Activated CD4-positive, alpha-beta T cell treated with anti-CD3 and anti-CD28 coated beads, Interleukin-2, amount 10 ng/mL, durations not matched to agents 24 days and 14 days (primary cell): ENCODE measurements at regions of chrX and their contacts with region 1.

Region 1: GRCh38 chrX:107627838-107628661 is at the start of gene PRPS1:
- DNase-seq: peak; percentile 96
- H3K4me3 Mint-ChIP-seq: peak within 1 kb of the TSS; percentile 94
- H3K27ac Mint-ChIP-seq: peak within 1 kb of the TSS; percentile 95
- H3K4me1 Mint-ChIP-seq: peaks cover 22% of the 10 kb centered on the region
- H3K27me3 Mint-ChIP-seq: no peaks in the 10 kb centered on the region
- total RNA-seq, gene PRPS1: 112 and 115 TPM in 2 replicates

Region 2: DNA sequence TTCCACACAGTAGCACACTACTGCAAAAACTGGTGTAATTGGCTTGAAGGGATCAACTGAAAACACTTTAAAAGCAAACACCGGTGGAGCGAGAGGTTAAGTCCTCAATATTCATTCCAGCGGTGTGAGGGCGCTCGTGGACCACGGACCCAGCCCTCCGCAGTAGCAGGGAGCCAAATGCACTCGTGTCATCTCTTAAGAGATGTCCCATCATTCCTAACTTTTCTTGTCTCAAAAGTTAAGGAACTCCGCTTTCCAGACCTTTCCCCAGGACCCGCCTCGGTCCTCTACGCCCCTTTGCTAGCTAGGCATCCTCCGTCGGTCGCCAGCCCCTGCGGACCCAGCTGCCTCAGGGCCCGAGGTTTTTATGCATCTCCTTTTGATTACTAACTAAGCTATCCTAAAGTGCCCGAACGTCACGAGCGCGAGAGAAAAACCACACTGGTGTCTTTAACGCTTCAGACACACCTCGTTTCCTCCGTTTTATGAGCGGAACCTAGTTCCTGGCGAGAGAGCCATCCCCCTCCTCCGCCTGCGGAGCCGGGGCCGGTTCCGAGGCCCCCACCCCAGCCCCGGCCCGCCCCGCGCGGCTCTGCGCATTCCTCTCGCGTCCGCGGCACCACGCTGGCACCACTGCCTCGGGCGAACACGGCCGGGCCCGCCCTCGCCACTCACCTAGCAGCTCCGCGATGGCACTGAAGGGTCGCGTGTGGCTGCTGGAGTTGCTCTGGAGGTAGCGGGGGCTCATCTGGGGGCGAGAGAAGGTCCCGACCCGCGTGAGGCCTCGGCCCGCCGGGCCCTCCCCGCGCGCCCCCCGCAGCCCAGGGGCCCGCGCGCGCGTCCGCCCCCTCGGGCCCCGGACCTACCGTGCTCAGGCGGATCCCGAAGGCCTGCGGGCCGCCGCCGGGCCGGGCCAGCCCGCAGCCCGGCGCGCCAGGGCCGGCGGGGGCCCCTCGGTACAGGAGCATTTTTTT is 628.8 kb before region 1 on chrX:
- intact Hi-C with region 1: loop called (anchors 10 kb)
- DNase-seq: peak; percentile 80
- H3K4me3 Mint-ChIP-seq: peak overlapping the region; percentile 88
- H3K27ac Mint-ChIP-seq: peak overlapping the region; percentile 40
- H3K4me1 Mint-ChIP-seq: peaks cover 7% of the 10 kb centered on the region
- H3K27me3 Mint-ChIP-seq: no peaks in the 10 kb centered on the region

Region 3: DNA sequence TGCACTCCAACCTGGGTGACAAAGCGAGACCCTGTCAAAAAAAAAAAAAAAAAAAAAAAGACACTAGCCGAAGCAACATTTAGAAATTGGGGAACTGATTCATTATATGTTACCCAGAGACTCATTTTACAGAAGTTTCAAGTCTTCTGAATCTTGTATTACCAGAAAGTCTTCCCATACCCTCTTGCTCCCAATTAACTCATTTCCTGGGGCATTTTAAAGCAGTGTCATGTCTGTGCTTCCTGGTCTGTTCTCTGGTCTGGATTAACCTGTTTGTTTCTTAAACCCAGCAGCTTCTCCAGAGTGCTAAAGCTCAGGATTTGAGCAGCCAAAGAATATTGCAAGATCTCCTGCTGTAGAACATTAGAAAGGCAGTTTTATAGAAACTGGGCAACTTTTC is 134.9 kb before region 1 on chrX:
- intact Hi-C with region 1: no loop called
- DNase-seq: no peak
- H3K4me3 Mint-ChIP-seq: no peak overlapping the region
- H3K27ac Mint-ChIP-seq: no peak overlapping the region
- H3K4me1 Mint-ChIP-seq: no peaks in the 10 kb centered on the region
- H3K27me3 Mint-ChIP-seq: peaks cover 3% of the 10 kb centered on the region

Region 4: GRCh38 chrX:107537815-107538214 is 90.2 kb before region 1 on chrX:
- intact Hi-C with region 1: loop called (anchors 5 kb)
- DNase-seq: peak; percentile 75
- H3K4me3 Mint-ChIP-seq: no peak overlapping the region
- H3K27ac Mint-ChIP-seq: no peak overlapping the region
- H3K4me1 Mint-ChIP-seq: no peaks in the 10 kb centered on the region
- H3K27me3 Mint-ChIP-seq: peaks cover 11% of the 10 kb centered on the region

Region 5: DNA sequence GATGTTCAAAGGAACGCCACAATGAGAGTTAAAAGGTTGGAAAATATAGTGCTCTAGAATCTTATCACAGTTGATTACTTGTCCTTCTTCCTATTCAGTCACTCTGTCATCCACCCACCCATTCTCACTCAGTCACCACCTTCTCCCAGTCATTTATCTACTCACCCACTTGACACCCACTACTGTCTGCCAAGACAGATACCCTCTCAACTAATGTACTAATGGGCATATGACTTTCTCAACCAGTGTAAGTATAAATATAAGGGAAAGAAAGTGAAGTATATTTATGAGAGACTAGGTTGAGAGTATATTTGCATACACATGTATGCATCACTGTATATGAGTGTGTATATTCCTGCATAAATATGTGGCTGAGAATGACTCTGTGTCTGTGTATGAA is 217.6 kb after region 1 on chrX:
- intact Hi-C with region 1: no loop called
- DNase-seq: no peak
- H3K4me3 Mint-ChIP-seq: no peak overlapping the region
- H3K27ac Mint-ChIP-seq: no peak overlapping the region
- H3K4me1 Mint-ChIP-seq: peaks cover 1% of the 10 kb centered on the region
- H3K27me3 Mint-ChIP-seq: no peaks in the 10 kb centered on the region